Dendritic cell treated with granulocyte-macrophage colony-stimulating factor and Interleukin-4, amounts not matched to agents 40 ng/mL and 50 ng/mL, for 4 days (primary cell): ENCODE measurements at regions of chr6 and their contacts with region 1.

Region 1: GRCh38 chr6:1311400-1312202 is at the start of gene FOXQ1:
- H3K4me3 Mint-ChIP-seq: peak within 1 kb of the TSS; percentile 92
- H3K27ac Mint-ChIP-seq: peak within 1 kb of the TSS; percentile 85
- H3K4me1 Mint-ChIP-seq: peaks cover 42% of the 10 kb centered on the region
- H3K27me3 Mint-ChIP-seq: peaks cover 75% of the 10 kb centered on the region

Region 2: DNA sequence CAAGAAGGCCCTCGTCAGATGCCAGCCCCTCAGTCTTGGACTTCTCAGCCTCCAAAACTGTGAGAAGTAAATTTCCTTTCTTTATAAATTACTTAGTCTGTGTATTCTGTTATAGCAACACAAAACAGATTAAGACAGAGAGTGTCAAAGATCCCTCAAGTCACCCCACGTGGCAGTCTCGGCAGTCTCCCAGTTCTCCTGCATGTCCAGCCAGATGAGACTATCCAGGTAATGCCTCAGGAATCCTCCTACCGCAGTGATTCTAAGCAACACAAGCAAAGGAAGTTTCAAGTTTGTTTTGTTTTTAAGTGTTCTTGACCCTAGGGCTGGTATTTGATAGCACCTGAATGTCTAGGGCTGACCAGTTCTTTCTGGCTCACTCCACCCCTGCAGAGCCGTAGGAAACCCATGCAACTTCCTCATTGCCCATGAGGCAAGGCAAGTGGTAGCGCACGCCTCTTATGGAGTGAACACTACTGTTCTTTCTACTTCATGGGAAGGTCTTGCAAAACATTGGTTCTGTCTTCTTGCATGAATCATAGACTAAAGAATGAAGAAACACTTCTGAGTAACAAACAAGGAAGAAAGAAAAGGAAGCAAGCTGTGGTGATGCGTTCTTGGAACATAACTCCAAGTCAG is 24.5 kb before region 1 on chr6:
- intact Hi-C with region 1: loop called (anchors 1 kb)
- H3K4me3 Mint-ChIP-seq: peak overlapping the region; percentile 13
- H3K27ac Mint-ChIP-seq: peak overlapping the region; percentile 91
- H3K4me1 Mint-ChIP-seq: peaks cover 62% of the 10 kb centered on the region
- H3K27me3 Mint-ChIP-seq: peaks cover 12% of the 10 kb centered on the region

Region 3: DNA sequence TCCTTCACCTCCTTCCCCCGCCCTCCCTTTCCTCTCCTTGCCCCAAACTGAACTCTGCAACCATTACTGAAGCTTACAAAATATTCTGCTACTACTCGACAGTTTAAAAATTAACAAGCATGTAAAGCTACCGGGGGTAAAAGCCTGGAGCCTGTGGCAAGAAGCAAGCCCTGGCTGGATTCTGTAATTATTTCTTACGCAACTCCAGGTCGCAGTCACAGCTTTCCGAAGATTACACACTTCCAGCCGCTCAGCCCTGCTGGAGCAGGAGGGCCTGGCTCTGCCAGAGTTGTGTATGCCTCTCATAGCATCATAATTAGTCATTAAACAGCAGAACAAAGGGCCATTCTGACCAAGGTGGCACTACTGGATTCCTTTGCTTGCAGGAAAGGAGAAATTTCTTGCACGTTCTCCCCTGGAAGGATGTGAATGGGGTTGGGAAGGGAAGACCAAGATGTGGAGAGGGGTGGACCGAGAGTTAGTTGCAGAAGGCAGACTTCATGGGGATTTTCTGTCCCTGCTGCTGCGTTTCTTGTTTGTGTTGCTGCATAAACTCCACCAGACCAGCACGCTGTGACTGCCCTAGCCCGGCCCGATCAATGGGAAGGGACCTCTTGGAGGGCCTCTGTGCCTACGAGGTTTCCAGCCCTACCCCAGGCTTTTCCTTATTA is 23.9 kb after region 1 on chr6:
- intact Hi-C with region 1: no loop called
- H3K4me3 Mint-ChIP-seq: no peak overlapping the region
- H3K27ac Mint-ChIP-seq: no peak overlapping the region
- H3K4me1 Mint-ChIP-seq: no peaks in the 10 kb centered on the region
- H3K27me3 Mint-ChIP-seq: peaks cover 44% of the 10 kb centered on the region